A549 (cell line): ENCODE measurements at regions of chr15 and their contacts with region 1.

Region 1: DNA sequence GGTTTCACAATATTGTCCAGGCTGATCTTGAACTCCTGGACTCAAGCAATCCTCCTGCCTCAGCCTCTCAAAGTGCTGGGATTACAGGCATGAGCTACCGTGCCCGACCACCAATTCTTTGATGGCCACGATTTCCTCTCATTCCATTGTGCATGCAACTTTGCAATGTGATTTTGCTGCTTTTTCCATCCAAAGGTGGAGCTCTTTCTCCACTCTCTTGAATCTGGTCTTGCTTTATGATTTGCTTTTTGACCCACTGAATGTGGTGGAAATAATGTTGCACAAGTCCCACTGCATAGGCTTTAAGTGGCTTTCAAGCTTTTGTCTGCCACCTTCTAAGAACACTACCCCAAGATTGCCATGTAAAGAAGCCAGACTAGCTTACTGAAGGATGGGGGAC is 10.6 kb downstream of the RPS27L start:
- DNase-seq: peak in 1 of 2 experiments; percentile 41
- ATAC-seq: peak; percentile 51; a peak in 5 of 6 replicates
- H3K4me3 ChIP-seq: no peak overlapping the region
- H3K27ac ChIP-seq: peak overlapping the region in 1 of 2 experiments; percentile 40; a peak in 3 of 6 replicates
- H3K4me1 ChIP-seq: peaks cover 16% of the 10 kb centered on the region
- CTCF ChIP-seq: peak; percentile 34; the same call in 2 of the 3 replicates
- EP300 ChIP-seq: no peak
- POLR2A ChIP-seq: no peak
- RAD21 ChIP-seq: peak; percentile 48 to 50

Region 2: DNA sequence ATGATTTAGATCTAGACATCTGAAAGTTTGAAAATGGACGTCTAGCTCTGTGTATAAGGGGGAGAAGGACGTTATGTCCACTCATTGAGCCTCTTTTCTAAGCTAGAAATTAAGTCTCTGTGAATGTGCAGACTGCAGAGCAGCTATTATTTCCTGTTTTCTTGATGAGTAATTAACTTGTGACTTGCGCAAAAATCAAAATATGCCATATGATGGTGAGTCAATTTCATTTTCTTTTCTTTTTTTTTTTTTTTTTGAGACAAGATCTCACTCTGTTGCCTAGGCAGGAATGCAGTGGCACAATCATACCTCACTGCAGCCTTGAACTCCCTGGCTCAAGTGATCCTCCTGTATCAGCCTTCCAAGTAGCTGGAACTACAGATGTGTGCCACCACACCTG is 10.9 kb before region 1 on chr15:
- CTCF ChIA-PET with region 1: interaction called, 24 read pairs
- POLR2A ChIA-PET with region 1: interaction called, 5 read pairs
- DNase-seq: peak in 1 of 2 experiments; percentile 36
- ATAC-seq: peak; percentile 65 to 77; a peak in 5 of 6 replicates
- H3K4me3 ChIP-seq: no peak overlapping the region
- H3K27ac ChIP-seq: peak overlapping the region; percentile 37 to 71; a peak in 5 of 6 replicates
- H3K4me1 ChIP-seq: peaks cover 40% of the 10 kb centered on the region
- CTCF ChIP-seq: no peak
- EP300 ChIP-seq: no peak
- POLR2A ChIP-seq: no peak
- RAD21 ChIP-seq: no peak